ENCODE measurements at regions of chr20 and their contacts with region 1.

Region 1: GRCh38 chr20:22931653-22932608 is 103.2 kb upstream of the SSTR4 start:
- DNase-seq: no peak
- ATAC-seq: no peak
- H3K4me3 ChIP-seq: no peak overlapping the region
- H3K27ac ChIP-seq: no peak overlapping the region
- H3K4me1 ChIP-seq: no peaks in the 10 kb centered on the region
- H3K27me3 ChIP-seq: no peaks in the 10 kb centered on the region

Region 2: GRCh38 chr20:22910287-22910852 is 21.6 kb before region 1 on chr20:
- intact Hi-C with region 1: loop called in 1 of 2 experiments (anchors 2 kb)
- DNase-seq: no peak
- ATAC-seq: no peak
- H3K4me3 ChIP-seq: no peak overlapping the region
- H3K27ac ChIP-seq: no peak overlapping the region
- H3K4me1 ChIP-seq: no peaks in the 10 kb centered on the region
- H3K27me3 ChIP-seq: no peaks in the 10 kb centered on the region